GM13976 (cell line): ENCODE measurements at regions of chr17 and their contacts with region 1.

Region 1: GRCh38 chr17:38667099-38667786 is 7.5 kb downstream of the EPOP start:
- DNase-seq: peak; percentile 83
- CTCF ChIP-seq: peak; percentile 99

Region 2: DNA sequence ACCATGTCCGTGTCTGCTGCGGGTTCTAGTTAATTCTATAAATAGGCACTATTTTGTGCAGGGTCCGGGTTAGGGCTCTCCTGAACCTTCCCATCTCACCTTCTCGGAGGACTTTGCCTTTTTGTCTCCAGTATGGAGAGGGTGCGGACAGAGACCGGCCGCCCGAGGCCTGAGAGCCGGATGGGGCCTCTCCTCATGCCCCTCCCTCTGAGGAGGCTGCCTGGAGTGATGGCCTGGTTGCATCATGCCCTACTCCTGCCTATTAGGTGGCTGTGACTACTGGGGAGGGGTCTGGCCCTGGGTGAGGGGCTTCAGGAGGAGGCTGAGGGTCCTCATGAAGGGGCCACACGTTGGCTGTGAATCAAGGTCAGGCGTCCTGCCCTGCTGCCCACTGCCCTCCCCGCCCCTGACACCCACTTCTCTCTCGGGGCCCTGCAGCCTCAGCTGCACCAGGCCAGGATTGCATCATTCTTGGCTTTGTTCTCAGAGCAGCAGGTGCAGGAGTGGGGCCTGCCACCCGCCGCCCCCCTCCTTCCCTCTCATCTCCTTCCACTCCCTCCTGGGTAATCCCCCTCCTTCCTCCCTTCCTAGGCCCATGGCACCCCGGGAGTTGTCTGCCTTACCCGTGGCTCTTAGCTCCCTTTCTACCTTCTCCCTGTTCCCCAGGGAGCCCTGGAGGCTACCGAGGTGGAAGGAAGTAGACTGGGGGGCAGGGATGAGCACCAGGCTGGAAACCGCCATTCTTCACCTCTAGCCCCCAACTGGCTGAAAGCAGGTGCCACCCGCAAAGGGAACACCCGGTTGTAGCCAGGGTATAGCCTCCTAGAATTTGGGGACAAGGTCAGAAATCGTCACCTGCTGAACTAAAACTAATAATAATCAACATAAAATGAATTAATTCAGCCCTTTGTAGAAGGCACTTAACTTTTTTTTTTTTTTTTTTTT is 251.7 kb before region 1 on chr17:
- in situ Hi-C with region 1: no loop called
- DNase-seq: peak; percentile 71
- CTCF ChIP-seq: no peak

Region 3: GRCh38 chr17:38509008-38509771 is 158.1 kb before region 1 on chr17:
- in situ Hi-C with region 1: loop called (anchors 10 kb)
- DNase-seq: peak; percentile 91
- CTCF ChIP-seq: peak; percentile 57

Region 4: GRCh38 chr17:38584350-38584925 is 82.8 kb before region 1 on chr17:
- in situ Hi-C with region 1: loop called (anchors 10 kb)
- DNase-seq: peak; percentile 88
- CTCF ChIP-seq: peak; percentile 87